GM10248 (cell line): ENCODE measurements at regions of chr3 and their contacts with region 1.

Region 1: GRCh38 chr3:105788593-105788992 is 80.2 kb downstream of the CBLB start:
- DNase-seq: no peak
- CTCF ChIP-seq: no peak

Region 2: GRCh38 chr3:105353485-105354161 is 435.0 kb before region 1 on chr3:
- CTCF ChIA-PET with region 1: no interaction called
- POLR2A ChIA-PET with region 1: no interaction called
- DNase-seq: peak; percentile 19
- CTCF ChIP-seq: no peak

Region 3: DNA sequence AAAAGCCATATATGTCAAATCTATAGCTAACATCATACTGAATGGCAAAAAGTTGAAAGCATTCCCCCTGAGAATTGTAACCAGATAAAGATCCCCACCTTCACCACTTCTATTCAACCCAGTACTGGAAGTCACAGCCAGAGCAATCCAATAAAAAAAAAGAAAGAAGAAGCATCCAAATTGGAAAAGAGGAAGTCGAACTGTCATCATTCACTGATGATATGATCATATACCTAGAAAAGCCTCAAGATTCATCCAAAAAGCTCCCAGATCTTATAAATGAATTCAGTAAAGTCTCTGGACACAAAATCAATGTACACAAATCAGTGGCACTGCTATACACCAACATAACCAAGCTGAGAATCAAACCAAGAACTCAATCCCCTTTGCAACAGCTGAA is 17.2 kb before region 1 on chr3:
- CTCF ChIA-PET with region 1: interaction called, 10 read pairs
- POLR2A ChIA-PET with region 1: no interaction called
- DNase-seq: no peak
- CTCF ChIP-seq: no peak